Panc1 (cell line): ENCODE measurements at regions of chr10 and their contacts with region 1.

Region 1: DNA sequence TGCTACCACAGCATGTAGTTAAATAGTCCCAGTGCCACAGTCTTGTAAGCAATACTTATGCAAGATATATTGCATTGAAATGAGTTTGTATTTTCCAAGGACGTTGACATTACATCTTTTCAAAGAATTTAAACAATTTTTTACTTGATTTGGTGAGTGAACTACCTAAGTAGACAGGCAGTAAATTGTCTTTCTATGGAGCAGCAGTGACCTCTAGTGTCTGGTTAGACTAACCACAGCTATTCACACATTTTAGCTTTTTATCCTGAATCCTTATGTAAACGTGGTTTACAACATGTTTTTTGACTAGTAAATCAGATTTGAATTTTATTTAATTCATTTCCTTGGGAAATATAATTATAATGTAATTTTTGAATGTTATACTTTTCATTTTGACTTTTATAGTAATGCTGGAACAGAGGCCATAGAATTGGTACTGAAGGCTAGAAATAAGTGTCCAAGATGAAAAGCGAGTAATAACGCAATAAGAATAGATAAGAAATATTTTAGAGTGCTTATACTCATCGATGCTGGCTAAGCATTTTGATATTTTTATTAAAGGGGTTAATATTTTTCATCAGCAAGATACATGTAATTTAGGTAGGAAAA is 5.6 kb downstream of the LRRTM3 start:
- DNase-seq: peak; percentile 30
- ATAC-seq: peak; percentile 82
- H3K4me3 ChIP-seq: no peak overlapping the region
- H3K27ac ChIP-seq: no peak overlapping the region
- H3K4me1 ChIP-seq: peaks cover 2% of the 10 kb centered on the region; the same call in 1 of the 2 replicates
- H3K27me3 ChIP-seq: peaks cover 37% of the 10 kb centered on the region
- CTCF ChIP-seq: peak; percentile 78; the same call in 1 of the 2 replicates

Region 2: GRCh38 chr10:67127441-67127840 is 196.0 kb after region 1 on chr10:
- CTCF ChIA-PET with region 1: no interaction called
- POLR2A ChIA-PET with region 1: no interaction called
- in situ Hi-C with region 1: no loop called
- intact Hi-C with region 1: no loop called
- DNase-seq: no peak
- ATAC-seq: no peak
- H3K4me3 ChIP-seq: no peak overlapping the region
- H3K27ac ChIP-seq: no peak overlapping the region
- H3K4me1 ChIP-seq: no peaks in the 10 kb centered on the region
- H3K27me3 ChIP-seq: no peaks in the 10 kb centered on the region
- CTCF ChIP-seq: no peak

Region 3: GRCh38 chr10:67520924-67521520 is 589.6 kb after region 1 on chr10:
- CTCF ChIA-PET with region 1: interaction called, 9 read pairs
- POLR2A ChIA-PET with region 1: no interaction called
- in situ Hi-C with region 1: no loop called
- intact Hi-C with region 1: loop called (anchors 5 kb)
- DNase-seq: peak; percentile 33
- ATAC-seq: peak; percentile 97
- H3K4me3 ChIP-seq: no peak overlapping the region
- H3K27ac ChIP-seq: peak overlapping the region; percentile 40; the same call in 1 of the 2 replicates
- H3K4me1 ChIP-seq: no peaks in the 10 kb centered on the region
- H3K27me3 ChIP-seq: no peaks in the 10 kb centered on the region; the same call in 1 of the 2 replicates
- CTCF ChIP-seq: peak; percentile 86